ENCODE measurements at regions of chrX and their contacts with region 1.

Region 1: DNA sequence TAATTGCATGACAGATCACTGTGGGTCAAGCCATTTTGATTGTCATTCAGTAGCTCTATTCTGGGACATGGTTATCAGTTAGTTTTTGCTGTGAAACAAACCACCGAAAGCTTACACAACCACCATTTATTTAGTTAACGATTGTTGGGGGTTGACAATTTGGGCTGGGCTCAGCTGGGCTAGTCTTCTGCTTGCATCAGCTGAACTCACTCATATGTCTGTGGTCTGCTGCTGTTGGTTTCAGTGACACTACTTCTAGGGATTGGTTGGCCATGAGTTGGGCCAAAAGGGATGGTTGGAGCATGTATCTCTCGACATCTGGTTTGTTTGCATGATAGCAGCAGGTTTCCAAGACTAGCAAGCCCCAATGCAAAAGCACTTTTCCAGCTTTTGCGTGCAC is 5.3 kb upstream of the SMIM10 start:
- DNase-seq: no peak
- ATAC-seq: no peak
- H3K4me3 ChIP-seq: no peak overlapping the region
- H3K27ac ChIP-seq: no peak overlapping the region
- H3K4me1 ChIP-seq: no peaks in the 10 kb centered on the region
- CTCF ChIP-seq: no peak
- EP300 ChIP-seq: no peak
- POLR2A ChIP-seq: no peak
- RAD21 ChIP-seq: no peak

Region 2: DNA sequence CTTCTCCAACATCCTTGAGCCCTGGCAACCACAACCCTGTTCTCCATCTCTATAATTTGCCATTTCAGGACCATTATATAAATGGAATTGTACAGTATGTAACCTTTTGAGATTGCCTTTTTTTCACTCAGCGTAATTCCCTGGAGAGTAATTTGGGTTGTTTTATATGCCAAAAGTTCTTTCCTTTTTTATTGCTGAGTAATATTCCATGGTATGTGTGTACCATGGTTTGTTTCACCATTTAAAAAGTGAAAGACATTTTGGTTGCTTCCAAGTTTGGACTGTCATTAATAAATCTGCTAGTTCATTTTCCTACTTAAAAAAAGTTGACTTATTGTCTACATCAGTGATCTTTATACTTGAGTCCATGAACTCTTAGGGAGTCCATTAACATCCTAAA is 27.6 kb before region 1 on chrX:
- CTCF ChIA-PET with region 1: no interaction called
- POLR2A ChIA-PET with region 1: no interaction called
- DNase-seq: no peak
- ATAC-seq: no peak
- H3K4me3 ChIP-seq: no peak overlapping the region
- H3K27ac ChIP-seq: no peak overlapping the region
- H3K4me1 ChIP-seq: no peaks in the 10 kb centered on the region
- CTCF ChIP-seq: no peak
- EP300 ChIP-seq: no peak
- POLR2A ChIP-seq: no peak
- RAD21 ChIP-seq: no peak

Region 3: GRCh38 chrX:134969726-134970125 is 15.8 kb before region 1 on chrX:
- CTCF ChIA-PET with region 1: interaction called, 12 read pairs
- POLR2A ChIA-PET with region 1: interaction called, 4 read pairs
- DNase-seq: no peak
- ATAC-seq: no peak
- H3K4me3 ChIP-seq: no peak overlapping the region
- H3K27ac ChIP-seq: no peak overlapping the region
- H3K4me1 ChIP-seq: peaks cover 3% of the 10 kb centered on the region; the same call in 1 of the 3 replicates
- CTCF ChIP-seq: no peak
- EP300 ChIP-seq: no peak
- POLR2A ChIP-seq: no peak
- RAD21 ChIP-seq: no peak

Measured in A549 (cell line).